Esophagus squamous epithelium (tissue), 5 donors: ENCODE measurements at regions of chr17 and their contacts with region 1.

Region 1: DNA sequence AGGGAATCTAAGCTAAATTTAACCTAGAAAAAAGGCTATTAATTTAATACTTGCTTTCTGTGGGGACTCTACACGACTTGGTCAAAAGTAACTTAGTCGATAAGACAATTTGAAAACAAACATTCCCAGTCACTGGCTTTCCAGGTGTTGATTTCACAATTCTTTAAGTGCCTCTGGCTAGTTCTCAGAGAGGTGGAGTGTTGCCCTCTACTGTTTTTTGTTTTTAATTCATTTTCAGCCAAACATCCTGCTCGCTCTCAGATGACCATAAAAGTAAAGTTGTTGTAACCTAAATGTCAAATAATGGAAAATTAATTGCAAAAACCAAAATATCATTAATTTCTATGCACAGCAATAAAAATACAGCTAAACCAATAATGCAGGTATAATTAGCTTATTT is 107.1 kb downstream of the MYO1D start:
- DNase-seq: no peak
- H3K4me3 ChIP-seq: no peak overlapping the region
- H3K27ac ChIP-seq: no peak overlapping the region
- H3K4me1 ChIP-seq: no peaks in the 10 kb centered on the region
- H3K27me3 ChIP-seq: no peaks in the 10 kb centered on the region
- CTCF ChIP-seq: peak in 1 of 6 experiments; percentile 26
- POLR2A ChIP-seq: no peak

Region 2: GRCh38 chr17:32659419-32659842 is 110.4 kb before region 1 on chr17:
- intact Hi-C with region 1: loop called (anchors 10 kb)
- DNase-seq: no peak
- H3K4me3 ChIP-seq: no peak overlapping the region
- H3K27ac ChIP-seq: no peak overlapping the region
- H3K4me1 ChIP-seq: peaks cover 0 to 11% (median 0%) of the 10 kb centered on the region in 3 donors
- H3K27me3 ChIP-seq: no peaks in the 10 kb centered on the region
- CTCF ChIP-seq: peak; percentile 78 to 94 (median 92)
- POLR2A ChIP-seq: no peak

Region 3: GRCh38 chr17:32877164-32877764 is 107.4 kb after region 1 on chr17:
- intact Hi-C with region 1: no loop called
- DNase-seq: peak; percentile 43
- H3K4me3 ChIP-seq: peak overlapping the region; percentile 78 to 100 (median 88)
- H3K27ac ChIP-seq: peak overlapping the region; percentile 92 to 100 (median 99)
- H3K4me1 ChIP-seq: peaks cover 7 to 40% (median 13%) of the 10 kb centered on the region in 3 donors
- H3K27me3 ChIP-seq: no peaks in the 10 kb centered on the region
- CTCF ChIP-seq: peak; percentile 66 to 100 (median 98)
- POLR2A ChIP-seq: no peak